Activated CD4-positive, alpha-beta memory T cell treated with anti-CD3 and anti-CD28 coated beads, Interleukin-2, amount 10 ng/mL, durations not matched to agents 7 days and 5 days (primary cell): ENCODE measurements at regions of chr10 and their contacts with region 1.

Region 1: GRCh38 chr10:114304017-114304570 is 65.0 kb downstream of the VWA2 start:
- DNase-seq: peak; percentile 77
- H3K4me3 Mint-ChIP-seq: peak overlapping the region; percentile 75
- H3K27ac Mint-ChIP-seq: peak overlapping the region; percentile 24
- H3K4me1 Mint-ChIP-seq: peaks cover 13% of the 10 kb centered on the region
- H3K27me3 Mint-ChIP-seq: no peaks in the 10 kb centered on the region

Region 2: GRCh38 chr10:114272696-114273095 is 31.4 kb before region 1 on chr10:
- CTCF ChIA-PET with region 1: no interaction called
- POLR2A ChIA-PET with region 1: no interaction called
- DNase-seq: no peak
- H3K4me3 Mint-ChIP-seq: no peak overlapping the region
- H3K27ac Mint-ChIP-seq: no peak overlapping the region
- H3K4me1 Mint-ChIP-seq: no peaks in the 10 kb centered on the region
- H3K27me3 Mint-ChIP-seq: peaks cover 11% of the 10 kb centered on the region

Region 3: DNA sequence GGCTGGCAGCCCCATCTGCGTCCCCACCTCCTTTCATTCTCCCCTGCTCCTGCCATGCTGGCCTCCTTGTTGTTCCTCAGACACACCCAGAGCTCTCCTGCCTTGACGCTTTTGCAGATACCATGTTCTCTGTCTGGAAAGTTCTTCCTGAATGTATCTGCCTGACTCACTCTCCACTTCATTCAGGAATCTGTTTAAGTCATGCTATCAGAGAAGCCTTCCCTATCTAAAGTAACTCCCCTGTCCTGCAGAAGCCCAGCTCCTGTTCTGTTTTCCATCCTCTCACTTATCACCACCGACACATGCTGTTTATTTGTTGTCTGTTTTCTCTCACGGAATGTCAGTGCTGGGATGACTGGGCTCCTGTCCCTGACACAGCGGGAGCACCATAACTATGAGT is 18.2 kb after region 1 on chr10:
- CTCF ChIA-PET with region 1: interaction called, 11 read pairs
- POLR2A ChIA-PET with region 1: no interaction called
- DNase-seq: no peak
- H3K4me3 Mint-ChIP-seq: no peak overlapping the region
- H3K27ac Mint-ChIP-seq: no peak overlapping the region
- H3K4me1 Mint-ChIP-seq: no peaks in the 10 kb centered on the region
- H3K27me3 Mint-ChIP-seq: peaks cover 9% of the 10 kb centered on the region

Region 4: DNA sequence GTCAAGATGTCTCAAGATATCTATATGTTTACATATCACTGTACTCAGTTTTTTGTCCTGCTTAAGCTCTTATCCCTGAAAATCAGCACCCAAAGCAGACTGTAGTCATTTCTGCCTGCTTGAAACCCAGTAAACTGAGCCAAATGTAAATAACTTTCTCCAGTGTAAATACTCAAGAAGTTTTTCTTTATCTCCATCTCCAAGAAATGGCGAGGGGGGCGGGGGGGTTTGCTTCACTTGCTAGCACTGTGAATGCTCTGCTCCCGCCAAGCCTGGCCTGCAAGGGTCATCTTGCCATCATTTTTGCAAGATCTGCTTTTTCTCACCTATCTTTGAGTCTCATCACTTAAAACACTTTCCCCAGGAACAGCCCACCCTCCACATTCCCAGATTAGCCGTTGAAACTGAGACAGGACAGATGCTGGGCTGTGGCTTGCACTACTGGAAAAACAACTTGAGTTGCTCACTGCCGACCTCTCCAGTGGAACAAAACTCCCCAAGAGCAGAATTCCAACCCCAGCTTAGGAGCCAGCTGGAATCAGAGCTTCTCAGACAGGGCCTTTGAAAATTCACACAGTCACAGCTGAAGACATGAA is 45.6 kb after region 1 on chr10:
- CTCF ChIA-PET with region 1: no interaction called
- POLR2A ChIA-PET with region 1: no interaction called
- DNase-seq: no peak
- H3K4me3 Mint-ChIP-seq: no peak overlapping the region
- H3K27ac Mint-ChIP-seq: no peak overlapping the region
- H3K4me1 Mint-ChIP-seq: no peaks in the 10 kb centered on the region
- H3K27me3 Mint-ChIP-seq: peaks cover 2% of the 10 kb centered on the region

Region 5: DNA sequence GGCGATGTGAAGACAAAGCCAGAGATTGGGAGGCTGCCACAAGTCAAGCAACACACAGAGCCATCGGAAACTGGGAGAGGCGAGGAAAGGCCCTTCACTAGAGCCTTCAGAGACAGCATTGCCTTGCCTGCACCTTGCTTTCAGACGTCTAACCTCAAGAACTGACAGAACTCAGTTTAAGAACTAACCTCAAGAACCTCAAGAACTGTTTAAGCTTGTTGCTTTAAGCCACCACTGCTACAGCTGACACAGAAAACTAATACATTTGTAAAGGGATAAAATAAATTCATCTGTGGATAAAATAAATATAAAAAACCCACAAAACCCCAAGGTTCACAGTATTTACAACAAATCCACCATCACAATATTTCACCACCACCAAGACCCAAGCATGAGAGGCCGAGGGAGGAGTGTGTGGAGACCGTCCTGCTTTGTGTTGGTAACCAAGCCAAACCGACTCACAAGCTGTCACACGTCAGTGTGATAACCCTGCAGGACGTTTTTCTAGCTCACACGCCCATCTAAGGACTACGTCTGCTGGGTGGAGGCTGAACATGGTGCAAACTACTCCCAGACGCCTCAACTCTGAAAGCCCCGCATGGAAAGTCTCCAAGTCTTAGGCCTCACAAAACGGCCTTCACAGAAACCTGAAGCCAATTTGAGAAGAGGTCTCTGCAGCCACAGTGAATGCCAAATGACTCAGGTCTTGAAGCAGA is 237.1 kb after region 1 on chr10:
- CTCF ChIA-PET with region 1: interaction called, 16 read pairs
- POLR2A ChIA-PET with region 1: interaction called, 3 read pairs
- DNase-seq: peak; percentile 83
- H3K4me3 Mint-ChIP-seq: peak overlapping the region; percentile 52
- H3K27ac Mint-ChIP-seq: peak overlapping the region; percentile 98
- H3K4me1 Mint-ChIP-seq: peaks cover 91% of the 10 kb centered on the region
- H3K27me3 Mint-ChIP-seq: no peaks in the 10 kb centered on the region

Region 6: GRCh38 chr10:114694752-114695151 is 390.7 kb after region 1 on chr10:
- CTCF ChIA-PET with region 1: interaction called, 14 read pairs
- POLR2A ChIA-PET with region 1: no interaction called
- DNase-seq: peak; percentile 37
- H3K4me3 Mint-ChIP-seq: no peak overlapping the region
- H3K27ac Mint-ChIP-seq: no peak overlapping the region
- H3K4me1 Mint-ChIP-seq: peaks cover 13% of the 10 kb centered on the region
- H3K27me3 Mint-ChIP-seq: peaks cover 22% of the 10 kb centered on the region

Region 7: DNA sequence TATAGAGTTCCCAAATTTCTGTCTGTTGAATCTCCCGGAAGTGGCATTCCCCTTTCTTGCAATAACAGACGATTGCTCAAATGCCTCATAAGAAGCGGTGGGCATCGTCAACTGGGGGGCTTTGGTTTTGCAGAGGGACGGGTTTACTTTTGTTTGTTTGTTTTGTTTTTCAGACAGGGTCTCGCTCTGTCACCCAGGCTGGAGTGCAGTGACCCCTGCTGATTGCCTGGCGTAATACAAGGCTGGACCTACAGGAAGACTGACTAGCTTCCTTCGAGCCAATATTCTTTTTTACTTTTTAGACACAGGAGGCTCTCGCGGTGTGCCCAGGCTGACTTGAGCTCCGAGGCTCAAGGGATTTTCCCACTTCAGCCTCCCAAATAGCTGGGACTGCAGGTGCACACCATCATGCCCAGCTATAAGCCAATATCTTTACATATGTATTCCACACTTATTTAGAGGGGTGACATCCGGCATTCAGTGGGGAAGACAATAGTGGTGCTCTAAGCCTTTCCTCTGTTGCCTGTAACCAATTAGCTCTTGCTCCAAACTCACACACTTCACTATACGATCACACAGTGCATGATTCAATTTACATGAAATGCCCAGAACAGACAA is 575.6 kb after region 1 on chr10:
- CTCF ChIA-PET with region 1: interaction called, 10 read pairs
- POLR2A ChIA-PET with region 1: no interaction called
- DNase-seq: peak; percentile 64
- H3K4me3 Mint-ChIP-seq: no peak overlapping the region
- H3K27ac Mint-ChIP-seq: no peak overlapping the region
- H3K4me1 Mint-ChIP-seq: peaks cover 26% of the 10 kb centered on the region
- H3K27me3 Mint-ChIP-seq: peaks cover 23% of the 10 kb centered on the region